ENCODE measurements at regions of chr11 and their contacts with region 1.

Region 1: GRCh38 chr11:17504330-17505107 is 27.9 kb upstream of the ABCC8 start:
- DNase-seq: peak; percentile 65 to 83
- ATAC-seq: peak; percentile 77 to 91
- H3K4me3 ChIP-seq: no peak overlapping the region
- H3K27ac ChIP-seq: no peak overlapping the region
- H3K4me1 ChIP-seq: peaks cover 7% of the 10 kb centered on the region; the same call in 2 of the 3 replicates
- CTCF ChIP-seq: peak; percentile 88
- EP300 ChIP-seq: no peak
- POLR2A ChIP-seq: no peak
- RAD21 ChIP-seq: peak; percentile 97 to 98

Region 2: GRCh38 chr11:17077520-17078401 is 426.8 kb before region 1 on chr11 and contains the start of gene RPS13:
- CTCF ChIA-PET with region 1: no interaction called
- POLR2A ChIA-PET with region 1: no interaction called
- DNase-seq: peak; percentile 98 to 99
- ATAC-seq: peak; percentile 94 to 96
- H3K4me3 ChIP-seq: peak within 1 kb of the TSS; percentile 95
- H3K27ac ChIP-seq: peak within 1 kb of the TSS; percentile 96 to 99
- H3K4me1 ChIP-seq: peaks cover 26% of the 10 kb centered on the region
- CTCF ChIP-seq: no peak
- EP300 ChIP-seq: no peak
- POLR2A ChIP-seq: peak; percentile 94
- RAD21 ChIP-seq: no peak
- polyA plus RNA-seq, gene RPS13: 943 and 1,343 TPM in 2 replicates

Region 3: GRCh38 chr11:17354601-17354991 is 149.9 kb before region 1 on chr11:
- CTCF ChIA-PET with region 1: interaction called, 48 read pairs
- POLR2A ChIA-PET with region 1: no interaction called
- DNase-seq: peak; percentile 80 to 84
- ATAC-seq: peak in 1 of 2 experiments; percentile 55; a peak in 3 of 6 replicates
- H3K4me3 ChIP-seq: peak overlapping the region; percentile 51; the same call in 2 of the 3 replicates
- H3K27ac ChIP-seq: no peak overlapping the region
- H3K4me1 ChIP-seq: no peaks in the 10 kb centered on the region; the same call in 2 of the 3 replicates
- CTCF ChIP-seq: peak; percentile 81
- EP300 ChIP-seq: no peak
- POLR2A ChIP-seq: no peak
- RAD21 ChIP-seq: peak in 1 of 2 experiments; percentile 44; a peak in 3 of 5 replicates

Region 4: DNA sequence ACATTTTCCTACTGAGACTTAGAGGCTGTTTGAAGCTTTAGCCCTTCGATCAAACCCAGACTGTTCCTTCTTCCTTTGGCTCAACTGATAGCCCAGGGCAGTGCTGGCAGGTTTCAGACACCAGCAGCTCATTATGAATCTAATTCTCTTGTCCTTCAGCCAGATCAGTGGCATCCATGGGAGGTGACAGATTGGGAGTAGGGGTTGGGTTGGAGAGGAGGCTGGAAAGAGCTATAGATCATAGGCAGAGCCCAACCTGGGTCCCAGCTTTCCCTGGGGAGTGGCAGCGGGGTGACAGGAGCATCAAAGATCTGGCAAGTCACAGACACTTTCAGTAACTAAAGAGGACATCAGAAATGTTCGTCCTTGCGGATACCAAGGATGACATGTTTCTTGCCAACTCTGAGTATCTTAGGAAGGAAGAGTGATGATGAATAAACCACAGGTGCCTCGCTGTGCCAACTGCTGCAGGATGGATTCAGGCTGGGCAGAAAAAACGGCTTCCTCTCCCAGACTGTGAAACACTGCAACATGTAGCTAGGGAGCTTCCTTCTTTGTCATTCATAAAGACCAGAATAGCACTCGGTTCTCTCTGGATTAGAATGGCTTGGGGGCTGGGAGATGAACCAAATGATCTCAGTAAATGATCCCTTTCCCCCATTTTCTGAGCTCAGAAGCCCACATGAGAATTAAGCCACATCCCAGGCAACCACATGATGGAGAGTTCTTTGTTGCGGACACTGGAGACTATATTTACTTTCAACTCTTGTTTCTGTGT is 46.9 kb before region 1 on chr11:
- CTCF ChIA-PET with region 1: interaction called, 12 read pairs
- POLR2A ChIA-PET with region 1: no interaction called
- DNase-seq: no peak
- ATAC-seq: no peak
- H3K4me3 ChIP-seq: no peak overlapping the region
- H3K27ac ChIP-seq: no peak overlapping the region
- H3K4me1 ChIP-seq: no peaks in the 10 kb centered on the region
- CTCF ChIP-seq: no peak
- EP300 ChIP-seq: no peak
- POLR2A ChIP-seq: no peak
- RAD21 ChIP-seq: no peak

Region 5: GRCh38 chr11:17473071-17473744 is 31.3 kb before region 1 on chr11:
- CTCF ChIA-PET with region 1: interaction called, 16 read pairs
- POLR2A ChIA-PET with region 1: no interaction called
- DNase-seq: peak; percentile 83 to 95
- ATAC-seq: peak; percentile 93 to 97
- H3K4me3 ChIP-seq: no peak overlapping the region
- H3K27ac ChIP-seq: no peak overlapping the region
- H3K4me1 ChIP-seq: no peaks in the 10 kb centered on the region
- CTCF ChIP-seq: peak; percentile 62
- EP300 ChIP-seq: no peak
- POLR2A ChIP-seq: no peak
- RAD21 ChIP-seq: peak; percentile 39 to 42; a peak in 4 of 5 replicates

Region 6: GRCh38 chr11:17489751-17490150 is 14.8 kb before region 1 on chr11:
- CTCF ChIA-PET with region 1: interaction called, 84 read pairs
- POLR2A ChIA-PET with region 1: no interaction called
- DNase-seq: no peak
- ATAC-seq: no peak
- H3K4me3 ChIP-seq: no peak overlapping the region
- H3K27ac ChIP-seq: no peak overlapping the region
- H3K4me1 ChIP-seq: no peaks in the 10 kb centered on the region
- CTCF ChIP-seq: no peak
- EP300 ChIP-seq: no peak
- POLR2A ChIP-seq: no peak
- RAD21 ChIP-seq: no peak

Region 7: GRCh38 chr11:17563248-17563647 is 58.7 kb after region 1 on chr11:
- CTCF ChIA-PET with region 1: no interaction called
- POLR2A ChIA-PET with region 1: no interaction called
- DNase-seq: peak in 1 of 2 experiments; percentile 18
- ATAC-seq: peak; percentile 72 to 87; a peak in 5 of 6 replicates
- H3K4me3 ChIP-seq: no peak overlapping the region
- H3K27ac ChIP-seq: no peak overlapping the region
- H3K4me1 ChIP-seq: no peaks in the 10 kb centered on the region
- CTCF ChIP-seq: no peak
- EP300 ChIP-seq: no peak
- POLR2A ChIP-seq: no peak
- RAD21 ChIP-seq: no peak